Posterior vena cava (tissue), 2 donors: ENCODE measurements at regions of chr10 and their contacts with region 1.

Region 1: GRCh38 chr10:29304264-29305030 is 15.6 kb downstream of the LYZL1 start:
- DNase-seq: no peak

Region 2: GRCh38 chr10:28628184-28628893 is 676.1 kb before region 1 on chr10:
- intact Hi-C with region 1: loop called in 1 of 2 experiments (anchors 5 kb)
- DNase-seq: peak; percentile 95

Region 3: GRCh38 chr10:28663576-28664313 is 640.7 kb before region 1 on chr10:
- intact Hi-C with region 1: loop called in 1 of 2 experiments (anchors 5 kb)
- DNase-seq: peak; percentile 92